Naive thymus-derived CD8-positive, alpha-beta T cell (primary cell): ENCODE measurements at regions of chr16 and their contacts with region 1.

Region 1: GRCh38 chr16:1342526-1343427 is 8.9 kb downstream of the TSR3 start:
- DNase-seq: peak; percentile 90 to 97 (median 96)
- ATAC-seq: peak; percentile 87 to 92
- H3K4me3 Mint-ChIP-seq: peak overlapping the region; percentile 69 to 87 (median 79)
- H3K27ac Mint-ChIP-seq: peak overlapping the region; percentile 4 to 84 (median 66)
- H3K4me1 Mint-ChIP-seq: peaks cover 10 to 21% (median 16%) of the 10 kb centered on the region in 4 donors
- H3K27me3 Mint-ChIP-seq: no peaks in the 10 kb centered on the region

Region 2: GRCh38 chr16:1068451-1068850 is 274.3 kb before region 1 on chr16:
- POLR2A ChIA-PET with region 1: no interaction called
- DNase-seq: no peak
- ATAC-seq: no peak
- H3K4me3 Mint-ChIP-seq: no peak overlapping the region
- H3K27ac Mint-ChIP-seq: no peak overlapping the region
- H3K4me1 Mint-ChIP-seq: peaks cover 0 to 7% (median 2%) of the 10 kb centered on the region in 4 donors
- H3K27me3 Mint-ChIP-seq: peaks cover 14 to 72% (median 28%) of the 10 kb centered on the region in 5 donors

Region 3: DNA sequence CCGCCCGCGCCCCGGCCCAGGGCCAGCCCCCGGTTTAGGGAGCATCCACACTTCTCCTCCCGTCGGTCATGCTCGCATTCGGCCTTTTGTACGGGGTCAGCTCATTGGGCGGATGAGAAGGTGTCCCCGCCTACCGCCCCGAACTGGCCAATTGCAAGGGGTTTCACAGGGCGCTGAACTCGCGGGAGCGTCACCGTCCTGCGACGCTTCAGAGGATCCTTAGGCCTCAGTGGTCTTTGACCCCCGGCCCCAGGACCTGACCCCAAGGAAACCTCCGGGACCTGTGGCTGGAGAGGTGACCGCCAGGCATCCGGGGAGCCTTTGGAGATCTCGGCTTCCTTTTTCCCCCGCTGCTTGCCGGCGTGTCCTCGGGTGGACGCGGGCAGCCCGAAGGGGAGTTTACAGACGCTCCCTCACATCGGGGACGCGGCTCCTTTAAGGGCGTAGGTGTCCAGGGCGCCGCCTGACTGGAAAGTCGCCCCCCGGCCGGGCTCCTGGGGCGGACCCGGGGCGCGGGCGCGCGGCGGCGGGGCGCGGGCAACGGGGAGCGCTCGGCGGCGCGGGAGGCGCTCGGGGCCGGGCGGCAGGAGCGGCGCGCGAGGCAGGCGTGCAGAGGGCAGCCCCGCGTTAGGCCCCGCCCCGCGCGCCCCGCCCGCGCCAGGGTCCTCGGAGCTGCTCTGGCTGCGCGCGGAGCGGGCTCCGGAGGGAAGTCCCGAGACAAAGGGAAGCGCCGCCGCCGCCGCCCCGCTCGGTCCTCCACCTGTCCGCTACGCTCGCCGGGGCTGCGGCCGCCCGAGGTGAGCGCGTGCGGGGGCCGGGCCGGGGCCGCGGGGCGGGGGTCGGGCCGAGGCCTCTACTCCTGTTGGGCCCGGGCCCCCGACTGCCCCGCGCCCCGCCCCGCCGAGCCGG is 33.5 kb before region 1 on chr16 and contains the start of gene UBE2I:
- POLR2A ChIA-PET with region 1: interaction called, 17 read pairs
- DNase-seq: peak; percentile 90 to 100 (median 98)
- ATAC-seq: peak; percentile 67 to 68
- H3K4me3 Mint-ChIP-seq: peak within 1 kb of the TSS; percentile 94 to 99 (median 98)
- H3K27ac Mint-ChIP-seq: peak within 1 kb of the TSS; percentile 98 to 100 (median 100)
- H3K4me1 Mint-ChIP-seq: peaks cover 23 to 70% (median 59%) of the 10 kb centered on the region in 4 donors
- H3K27me3 Mint-ChIP-seq: no peaks in the 10 kb centered on the region
- polyA plus RNA-seq, gene UBE2I: 87.5 to 89.6 (median 89.0) TPM

Region 4: GRCh38 chr16:1331712-1332617 is 10.8 kb before region 1 on chr16:
- POLR2A ChIA-PET with region 1: interaction called, 12 read pairs
- DNase-seq: peak in 6 of 10 donors; percentile 28 to 76 (median 45)
- ATAC-seq: peak; percentile 30 to 51
- H3K4me3 Mint-ChIP-seq: peak overlapping the region; percentile 60 to 81 (median 78)
- H3K27ac Mint-ChIP-seq: peak overlapping the region in 6 of 10 donors; percentile 20 to 74 (median 60)
- H3K4me1 Mint-ChIP-seq: peaks cover 8 to 25% (median 22%) of the 10 kb centered on the region in 4 donors
- H3K27me3 Mint-ChIP-seq: peaks cover 0 to 27% (median 10%) of the 10 kb centered on the region in 5 donors